ENCODE measurements at regions of chr2 and their contacts with region 1.

Region 1: DNA sequence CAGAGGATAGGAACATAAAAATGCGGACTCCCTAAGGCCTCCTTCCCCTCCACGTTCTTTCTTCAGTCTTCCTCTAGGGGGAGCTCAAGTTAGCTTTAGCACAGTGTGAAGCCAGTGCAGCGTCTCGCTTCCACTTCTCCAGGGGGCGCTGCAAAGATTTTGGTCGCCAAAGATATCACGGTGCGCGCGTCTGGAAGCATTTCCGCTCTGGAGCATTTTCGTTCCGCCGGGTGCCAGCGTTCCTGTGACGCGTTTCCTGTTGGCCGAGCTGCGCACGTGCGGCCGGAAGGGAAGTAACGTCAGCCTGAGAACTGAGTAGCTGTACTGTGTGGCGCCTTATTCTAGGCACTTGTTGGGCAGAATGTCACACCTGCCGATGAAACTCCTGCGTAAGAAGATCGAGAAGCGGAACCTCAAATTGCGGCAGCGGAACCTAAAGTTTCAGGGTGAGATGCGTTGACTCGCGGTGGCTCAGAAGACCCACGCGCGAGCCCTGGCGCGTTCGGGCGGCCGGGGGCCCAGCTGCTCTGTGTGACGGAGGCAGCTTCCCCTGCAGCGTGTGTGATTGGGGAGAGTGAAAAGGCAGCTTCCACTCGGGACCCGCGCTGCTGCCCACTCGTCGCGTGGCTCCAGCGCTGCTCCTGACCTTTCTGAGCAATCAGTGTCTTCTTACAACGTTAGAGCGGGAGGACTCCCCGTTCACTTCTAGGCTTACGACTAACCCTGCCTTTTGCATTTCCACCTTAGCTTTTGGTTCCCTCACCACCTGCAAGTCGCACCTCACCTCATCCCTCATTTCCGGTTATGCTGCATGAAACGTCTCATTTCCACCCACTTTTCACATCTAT is at the start of gene DDX18:
- DNase-seq: peak; percentile 92
- ATAC-seq: peak; percentile 88
- H3K4me3 Mint-ChIP-seq: peak within 1 kb of the TSS; percentile 97
- H3K27ac Mint-ChIP-seq: peak within 1 kb of the TSS; percentile 99
- H3K4me1 Mint-ChIP-seq: peaks cover 51% of the 10 kb centered on the region
- H3K27me3 Mint-ChIP-seq: no peaks in the 10 kb centered on the region
- CTCF ChIP-seq: peak; percentile 82
- total RNA-seq, gene DDX18: 98.9 and 109 TPM in 2 replicates

Region 2: DNA sequence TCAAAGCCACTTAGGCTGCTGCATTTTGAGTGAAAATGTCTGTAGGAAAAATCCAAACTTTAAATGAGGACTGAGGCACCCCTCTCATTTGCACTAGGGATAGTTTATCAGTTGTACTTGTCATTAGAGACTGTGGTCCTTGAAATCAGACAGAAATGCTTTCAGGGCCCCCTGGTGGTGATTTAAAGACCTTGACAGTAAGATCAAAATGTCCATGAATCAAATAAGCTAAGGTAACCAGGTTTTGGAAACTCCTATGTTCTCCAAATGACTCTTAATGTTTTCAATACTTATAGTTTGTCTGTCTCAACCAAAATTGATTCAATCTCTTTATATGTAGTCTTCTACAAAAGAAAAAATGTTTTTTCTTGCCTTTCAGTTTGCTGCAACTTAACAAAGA is 28.9 kb before region 1 on chr2:
- CTCF ChIA-PET with region 1: no interaction called
- POLR2A ChIA-PET with region 1: no interaction called
- intact Hi-C with region 1: no loop called
- DNase-seq: no peak
- ATAC-seq: no peak
- H3K4me3 Mint-ChIP-seq: no peak overlapping the region
- H3K27ac Mint-ChIP-seq: no peak overlapping the region
- H3K4me1 Mint-ChIP-seq: no peaks in the 10 kb centered on the region
- H3K27me3 Mint-ChIP-seq: no peaks in the 10 kb centered on the region
- CTCF ChIP-seq: peak; percentile 22

Region 3: DNA sequence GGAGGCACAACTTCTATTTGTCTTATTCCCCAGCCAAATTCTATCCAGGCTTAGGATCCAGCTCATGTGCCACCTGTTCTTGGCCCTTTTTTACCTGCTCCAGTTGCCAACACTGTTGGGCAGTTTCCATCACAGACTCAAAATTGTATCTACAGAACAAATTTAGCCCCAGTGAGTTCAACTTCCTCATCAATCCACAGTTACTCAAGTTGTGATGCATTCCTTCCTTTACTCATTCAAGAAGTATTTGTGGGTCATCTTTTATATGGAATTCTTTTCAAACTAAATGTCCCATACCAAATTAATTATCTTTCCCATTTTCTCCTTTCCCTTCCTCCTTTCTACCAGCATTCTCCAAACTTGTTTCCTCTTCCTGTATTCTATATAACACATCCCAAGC is 12.8 kb before region 1 on chr2:
- CTCF ChIA-PET with region 1: no interaction called
- POLR2A ChIA-PET with region 1: no interaction called
- intact Hi-C with region 1: no loop called
- DNase-seq: no peak
- ATAC-seq: no peak
- H3K4me3 Mint-ChIP-seq: no peak overlapping the region
- H3K27ac Mint-ChIP-seq: no peak overlapping the region
- H3K4me1 Mint-ChIP-seq: peaks cover 4% of the 10 kb centered on the region
- H3K27me3 Mint-ChIP-seq: peaks cover 27% of the 10 kb centered on the region
- CTCF ChIP-seq: no peak

Region 4: GRCh38 chr2:117949806-117950205 is 135.2 kb after region 1 on chr2:
- CTCF ChIA-PET with region 1: no interaction called
- POLR2A ChIA-PET with region 1: no interaction called
- intact Hi-C with region 1: loop called (anchors 5 kb)
- DNase-seq: no peak
- ATAC-seq: no peak
- H3K4me3 Mint-ChIP-seq: no peak overlapping the region
- H3K27ac Mint-ChIP-seq: no peak overlapping the region
- H3K4me1 Mint-ChIP-seq: no peaks in the 10 kb centered on the region
- H3K27me3 Mint-ChIP-seq: no peaks in the 10 kb centered on the region
- CTCF ChIP-seq: no peak

Region 5: DNA sequence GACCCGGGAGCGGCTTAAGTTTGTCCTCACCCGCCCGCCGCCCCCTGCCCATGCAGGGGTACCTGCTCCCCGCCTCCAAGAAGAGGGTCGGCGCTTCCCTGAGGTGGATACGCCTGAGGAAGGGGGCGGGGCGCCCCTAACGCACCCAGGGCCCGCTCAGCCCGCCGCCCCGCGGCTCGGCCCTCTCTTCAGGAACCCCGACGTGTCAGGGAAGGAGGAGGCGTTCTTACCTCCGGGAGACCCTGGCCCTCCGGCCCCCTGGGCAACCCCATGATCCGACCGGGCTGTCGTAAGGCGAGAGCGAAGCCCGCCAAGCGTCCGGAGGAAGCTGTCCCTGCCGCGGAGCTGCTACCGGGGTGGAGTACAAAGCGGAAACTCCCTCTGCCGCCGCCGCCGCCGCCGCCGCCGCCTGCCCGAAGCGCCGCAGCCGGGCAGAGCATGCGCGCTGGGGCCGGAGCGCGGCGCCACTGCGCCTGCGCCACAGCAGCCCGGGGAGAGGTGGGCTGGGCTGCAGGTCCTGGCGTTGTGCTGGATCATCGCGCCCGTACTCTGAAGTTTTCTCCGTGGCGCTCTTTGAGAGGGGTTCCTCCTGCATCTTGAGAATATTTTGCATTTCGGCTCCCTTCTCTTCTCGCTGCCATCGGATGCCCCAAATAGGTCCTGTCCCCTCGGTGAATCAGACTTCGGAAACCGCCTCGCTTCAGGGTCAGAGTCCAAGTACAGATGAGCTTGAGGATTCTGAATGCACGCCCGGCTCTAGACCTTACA is 199.3 kb after region 1 on chr2 and contains the start of gene CCDC93:
- CTCF ChIA-PET with region 1: interaction called, 5 read pairs
- POLR2A ChIA-PET with region 1: interaction called, 7 read pairs
- intact Hi-C with region 1: loop called (anchors 1 kb)
- DNase-seq: peak; percentile 94
- ATAC-seq: peak; percentile 82
- H3K4me3 Mint-ChIP-seq: peak within 1 kb of the TSS; percentile 95
- H3K27ac Mint-ChIP-seq: peak within 1 kb of the TSS; percentile 91
- H3K4me1 Mint-ChIP-seq: peaks cover 33% of the 10 kb centered on the region
- H3K27me3 Mint-ChIP-seq: peaks cover 9% of the 10 kb centered on the region
- CTCF ChIP-seq: no peak
- total RNA-seq, gene CCDC93: 35.5 and 38.8 TPM in 2 replicates

Region 6: DNA sequence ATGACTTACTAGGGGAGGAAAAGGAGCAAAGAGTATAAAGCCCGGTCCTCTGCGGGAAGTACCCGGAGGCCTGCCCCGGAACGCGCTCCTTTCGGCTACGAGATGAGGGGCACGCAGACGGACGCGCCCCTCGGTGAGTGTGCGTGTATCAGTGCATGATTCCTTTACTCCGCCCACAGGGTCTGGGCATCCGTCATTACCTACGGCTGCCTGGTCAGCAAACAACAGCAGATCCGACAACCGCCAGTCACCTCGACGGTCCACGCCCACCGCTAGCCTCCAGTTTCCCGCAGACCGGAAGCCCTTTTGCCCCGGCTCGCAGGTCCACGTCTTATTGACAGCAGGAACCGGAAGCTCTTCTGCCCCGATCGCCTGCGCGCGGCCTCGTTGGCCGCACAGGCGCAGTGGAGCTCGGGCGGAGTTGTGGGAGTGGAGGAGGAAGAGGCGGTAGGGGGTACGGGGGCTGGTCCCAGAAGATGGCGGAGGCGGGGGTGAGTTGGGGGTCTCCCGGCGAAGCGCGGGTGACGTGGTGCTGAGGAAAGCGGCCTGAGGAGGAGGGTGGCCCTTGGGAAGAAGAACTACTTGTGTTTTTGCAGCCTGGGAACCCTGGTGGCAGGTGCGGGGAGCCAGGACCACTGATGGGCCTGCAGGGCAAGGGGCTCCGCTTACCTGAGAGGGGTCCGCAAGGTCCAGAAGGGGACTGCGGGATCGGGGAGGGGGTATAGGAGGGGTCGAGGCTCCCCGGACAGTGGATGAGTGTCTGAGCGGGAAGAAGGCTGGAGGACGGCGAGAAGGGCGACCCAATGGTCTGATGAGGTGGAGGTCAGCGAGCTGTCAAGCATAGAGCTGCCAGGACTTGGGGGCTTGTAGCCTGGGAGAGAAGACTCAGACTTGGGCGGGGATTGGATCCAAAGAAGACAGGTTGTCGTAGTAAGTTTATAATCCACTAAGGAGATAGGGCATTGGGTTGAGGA is 273.7 kb after region 1 on chr2 and contains the start of gene INSIG2:
- CTCF ChIA-PET with region 1: no interaction called
- POLR2A ChIA-PET with region 1: interaction called, 9 read pairs
- intact Hi-C with region 1: loop called (anchors 1 kb)
- DNase-seq: peak; percentile 88
- ATAC-seq: peak; percentile 84
- H3K4me3 Mint-ChIP-seq: peak within 1 kb of the TSS; percentile 94
- H3K27ac Mint-ChIP-seq: peak within 1 kb of the TSS; percentile 84
- H3K4me1 Mint-ChIP-seq: peaks cover 32% of the 10 kb centered on the region
- H3K27me3 Mint-ChIP-seq: no peaks in the 10 kb centered on the region
- CTCF ChIP-seq: no peak
- total RNA-seq, gene INSIG2: 16.8 and 16.9 TPM in 2 replicates

Region 7: DNA sequence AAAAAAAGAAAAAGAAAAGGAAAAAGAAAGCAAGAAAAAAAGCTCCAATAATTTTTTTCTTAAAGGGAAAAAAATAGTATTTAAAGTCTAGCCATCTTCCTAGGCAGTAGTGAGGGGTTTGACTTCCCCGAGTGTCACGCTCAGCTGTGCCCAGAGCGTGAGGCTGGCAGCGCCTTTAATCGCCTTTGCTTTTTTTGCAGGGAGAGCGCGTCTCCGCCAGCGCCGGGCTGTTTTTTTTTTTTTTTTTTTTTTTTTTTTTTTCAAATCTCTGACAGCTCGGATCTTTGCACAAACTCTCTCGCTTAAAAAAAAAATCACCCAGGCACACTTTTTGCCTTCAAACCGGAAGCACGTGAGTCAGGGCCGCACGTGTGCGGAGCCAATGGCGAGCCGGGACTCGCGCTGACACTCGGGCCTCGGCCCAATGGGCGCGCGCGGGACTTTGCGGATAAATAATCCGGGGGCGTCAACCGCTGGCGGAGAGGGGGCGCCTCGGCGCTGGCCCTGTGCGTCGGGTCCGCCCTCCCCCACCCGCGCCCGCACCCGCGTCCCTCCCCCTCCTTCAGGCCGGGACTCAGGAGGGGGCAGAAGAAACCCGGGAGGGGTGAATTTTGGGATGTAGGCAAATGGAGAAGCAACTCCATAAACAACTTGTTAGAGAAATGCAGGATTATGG is 1033.0 kb after region 1 on chr2 and contains the start of gene EN1:
- CTCF ChIA-PET with region 1: no interaction called
- POLR2A ChIA-PET with region 1: interaction called, 10 read pairs
- intact Hi-C with region 1: loop called (anchors 10 kb)
- DNase-seq: no peak
- ATAC-seq: no peak
- H3K4me3 Mint-ChIP-seq: peak within 1 kb of the TSS; percentile 36
- H3K27ac Mint-ChIP-seq: peak within 1 kb of the TSS; percentile 21
- H3K4me1 Mint-ChIP-seq: peaks cover 20% of the 10 kb centered on the region
- H3K27me3 Mint-ChIP-seq: peaks cover 70% of the 10 kb centered on the region
- CTCF ChIP-seq: no peak
- total RNA-seq, gene EN1: not detected in 2 replicates

Region 8: DNA sequence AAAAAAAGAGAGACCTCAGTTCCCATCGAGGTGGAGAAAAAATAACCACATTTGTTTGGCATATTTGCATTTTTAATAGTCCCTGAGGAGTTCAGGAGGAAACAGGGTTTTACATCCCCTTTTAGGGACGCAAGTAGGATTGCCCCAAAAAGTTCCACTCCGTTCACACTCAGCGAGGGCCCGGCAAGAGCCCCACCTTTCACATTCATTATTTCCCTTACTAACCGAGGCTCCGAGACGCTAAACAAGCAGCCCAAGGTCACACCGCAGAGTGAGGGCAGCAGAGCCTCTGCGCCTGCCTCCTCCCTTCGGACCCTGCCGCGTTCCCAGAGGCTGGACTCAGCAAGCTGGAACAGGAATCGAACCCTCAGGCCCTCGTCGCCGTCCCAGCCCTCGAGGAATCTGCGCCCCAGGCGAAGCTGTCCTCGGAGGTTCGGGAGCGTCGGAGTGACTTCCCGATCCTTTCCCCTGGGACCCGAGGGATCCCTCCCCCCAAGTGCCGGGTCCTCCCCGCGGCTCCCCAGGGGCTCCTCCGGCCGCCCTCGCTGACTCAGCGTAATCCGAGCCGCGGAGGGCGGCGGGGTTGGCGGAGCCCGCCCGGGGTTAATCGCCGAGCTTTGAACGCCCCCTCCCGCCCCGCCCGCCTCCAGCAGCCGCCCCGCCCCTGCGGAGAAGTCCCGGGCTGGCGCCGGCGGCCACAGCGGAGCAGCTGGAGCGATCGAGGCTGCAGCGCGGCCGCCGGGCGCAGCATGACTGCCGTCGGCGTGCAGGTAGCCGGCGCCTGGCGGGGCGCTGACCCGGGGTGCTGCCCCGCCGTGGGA is 1616.7 kb after region 1 on chr2 and contains the start of gene TMEM37:
- CTCF ChIA-PET with region 1: no interaction called
- POLR2A ChIA-PET with region 1: no interaction called
- intact Hi-C with region 1: loop called (anchors 5 kb)
- DNase-seq: peak; percentile 55
- ATAC-seq: peak; percentile 79
- H3K4me3 Mint-ChIP-seq: peak within 1 kb of the TSS; percentile 77
- H3K27ac Mint-ChIP-seq: peak within 1 kb of the TSS; percentile 42
- H3K4me1 Mint-ChIP-seq: peaks cover 19% of the 10 kb centered on the region
- H3K27me3 Mint-ChIP-seq: peaks cover 47% of the 10 kb centered on the region
- CTCF ChIP-seq: no peak
- total RNA-seq, gene TMEM37: 0.37 and 0.51 TPM in 2 replicates